Activated T-helper 2 cell treated with anti-CD3 and anti-CD28 coated beads, Interferon-gamma antibody, Interleukin-2, Interleukin-4, amounts not matched to agents 10 μg/mL and 5 μg/mL and 100 μg/mL, durations not matched to agents 14 hours and 24 hours and 36 hours (primary cell): ENCODE measurements at regions of chr12 and their contacts with region 1.

Region 1: DNA sequence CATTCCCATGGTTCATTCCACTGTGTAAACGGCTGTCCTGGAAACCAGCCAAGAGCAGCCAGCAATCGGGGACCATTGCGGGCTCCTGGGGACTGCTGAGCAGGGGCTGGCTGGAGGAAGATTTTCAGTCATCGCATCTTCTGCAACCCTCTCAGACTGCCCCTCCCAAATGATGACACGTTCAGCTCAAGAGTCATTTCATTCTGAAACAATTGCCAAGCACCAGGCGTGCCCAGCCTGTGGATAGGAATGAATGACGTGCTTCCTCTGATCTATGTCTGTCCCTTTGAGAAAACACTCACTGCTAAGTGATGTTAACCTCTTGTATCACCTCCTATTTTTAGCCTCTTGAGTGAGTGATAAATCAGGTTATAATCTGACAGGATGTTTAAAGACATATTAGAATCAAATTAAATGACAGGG is 62.0 kb downstream of the NDUFA12 start:
- DNase-seq: peak; percentile 53
- H3K4me3 Mint-ChIP-seq: no peak overlapping the region
- H3K27ac Mint-ChIP-seq: peak overlapping the region; percentile 47
- H3K4me1 Mint-ChIP-seq: peaks cover 33% of the 10 kb centered on the region
- H3K27me3 Mint-ChIP-seq: peaks cover 5% of the 10 kb centered on the region

Region 2: DNA sequence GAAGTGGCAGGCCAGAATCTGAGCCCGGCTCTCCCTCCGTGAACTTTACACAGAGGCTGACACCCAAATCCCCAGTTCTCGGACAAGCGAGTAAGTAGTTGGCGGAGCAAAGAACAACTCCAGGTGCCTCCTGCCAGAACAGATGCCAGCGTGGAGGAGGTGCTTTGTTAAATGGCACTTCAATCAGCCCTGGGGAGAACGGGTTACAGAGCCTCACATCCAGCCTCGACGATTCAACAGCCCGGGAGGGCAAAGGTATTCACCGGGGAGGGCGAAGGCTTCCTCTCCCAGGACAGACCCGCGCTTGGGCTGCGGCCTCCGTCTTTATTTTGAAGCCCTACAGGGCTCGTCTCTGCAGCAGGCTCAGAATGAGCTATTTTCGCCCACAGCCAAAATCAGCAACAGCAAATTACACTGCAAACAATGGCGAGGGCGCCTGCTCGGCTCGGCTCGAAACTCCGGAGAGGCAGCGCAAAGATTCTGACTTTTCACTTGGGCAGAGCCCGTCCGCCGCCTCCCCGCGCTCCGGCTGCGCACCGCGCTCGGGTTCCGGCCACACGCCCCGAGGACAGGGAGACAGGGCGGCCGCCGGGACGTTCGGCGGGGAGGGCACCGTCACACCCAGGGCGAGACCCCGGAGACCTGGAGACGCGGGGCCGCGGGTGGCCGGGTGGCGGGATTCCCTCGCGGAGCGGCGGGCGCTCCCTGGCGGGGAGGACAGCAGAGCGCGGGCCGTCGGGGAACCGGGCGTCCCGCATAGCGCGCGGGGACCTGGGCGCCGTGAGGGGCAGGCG is 291.9 kb before region 1 on chr12:
- intact Hi-C with region 1: loop called (anchors 10 kb)
- DNase-seq: no peak
- H3K4me3 Mint-ChIP-seq: peak overlapping the region; percentile 76
- H3K27ac Mint-ChIP-seq: no peak overlapping the region
- H3K4me1 Mint-ChIP-seq: peaks cover 18% of the 10 kb centered on the region
- H3K27me3 Mint-ChIP-seq: peaks cover 74% of the 10 kb centered on the region

Region 3: GRCh38 chr12:94875525-94875924 is 65.9 kb before region 1 on chr12:
- intact Hi-C with region 1: no loop called
- DNase-seq: no peak
- H3K4me3 Mint-ChIP-seq: no peak overlapping the region
- H3K27ac Mint-ChIP-seq: no peak overlapping the region
- H3K4me1 Mint-ChIP-seq: peaks cover 2% of the 10 kb centered on the region
- H3K27me3 Mint-ChIP-seq: peaks cover 45% of the 10 kb centered on the region

Region 4: GRCh38 chr12:95003213-95003920 is 61.9 kb after region 1 on chr12 and contains the start of gene NDUFA12:
- intact Hi-C with region 1: loop called (anchors 2 kb)
- DNase-seq: peak; percentile 92
- H3K4me3 Mint-ChIP-seq: peak within 1 kb of the TSS; percentile 90
- H3K27ac Mint-ChIP-seq: peak within 1 kb of the TSS; percentile 84
- H3K4me1 Mint-ChIP-seq: peaks cover 27% of the 10 kb centered on the region
- H3K27me3 Mint-ChIP-seq: no peaks in the 10 kb centered on the region
- total RNA-seq, gene NDUFA12: 117 and 118 TPM in 2 replicates